ENCODE measurements at regions of chr13 and their contacts with region 1.

Region 1: GRCh38 chr13:23609874-23610576 is 39.8 kb downstream of the TNFRSF19 start:
- DNase-seq: no peak
- H3K4me3 ChIP-seq: peak overlapping the region; percentile 19 to 27
- H3K27ac ChIP-seq: peak overlapping the region; percentile 75
- H3K4me1 ChIP-seq: peaks cover 34% of the 10 kb centered on the region
- H3K27me3 ChIP-seq: no peaks in the 10 kb centered on the region
- CTCF ChIP-seq: no peak
- POLR2A ChIP-seq: no peak

Region 2: GRCh38 chr13:23321535-23322241 is 288.3 kb before region 1 on chr13:
- intact Hi-C with region 1: loop called (anchors 5 kb)
- DNase-seq: no peak
- H3K4me3 ChIP-seq: peak overlapping the region in 1 of 2 donors; percentile 27
- H3K27ac ChIP-seq: no peak overlapping the region
- H3K4me1 ChIP-seq: peaks cover 23% of the 10 kb centered on the region
- H3K27me3 ChIP-seq: no peaks in the 10 kb centered on the region
- CTCF ChIP-seq: no peak
- POLR2A ChIP-seq: no peak

Region 3: GRCh38 chr13:23599083-23599925 is 10.7 kb before region 1 on chr13:
- intact Hi-C with region 1: no loop called
- DNase-seq: no peak
- H3K4me3 ChIP-seq: no peak overlapping the region
- H3K27ac ChIP-seq: no peak overlapping the region
- H3K4me1 ChIP-seq: no peaks in the 10 kb centered on the region
- H3K27me3 ChIP-seq: no peaks in the 10 kb centered on the region
- CTCF ChIP-seq: no peak
- POLR2A ChIP-seq: no peak

Region 4: DNA sequence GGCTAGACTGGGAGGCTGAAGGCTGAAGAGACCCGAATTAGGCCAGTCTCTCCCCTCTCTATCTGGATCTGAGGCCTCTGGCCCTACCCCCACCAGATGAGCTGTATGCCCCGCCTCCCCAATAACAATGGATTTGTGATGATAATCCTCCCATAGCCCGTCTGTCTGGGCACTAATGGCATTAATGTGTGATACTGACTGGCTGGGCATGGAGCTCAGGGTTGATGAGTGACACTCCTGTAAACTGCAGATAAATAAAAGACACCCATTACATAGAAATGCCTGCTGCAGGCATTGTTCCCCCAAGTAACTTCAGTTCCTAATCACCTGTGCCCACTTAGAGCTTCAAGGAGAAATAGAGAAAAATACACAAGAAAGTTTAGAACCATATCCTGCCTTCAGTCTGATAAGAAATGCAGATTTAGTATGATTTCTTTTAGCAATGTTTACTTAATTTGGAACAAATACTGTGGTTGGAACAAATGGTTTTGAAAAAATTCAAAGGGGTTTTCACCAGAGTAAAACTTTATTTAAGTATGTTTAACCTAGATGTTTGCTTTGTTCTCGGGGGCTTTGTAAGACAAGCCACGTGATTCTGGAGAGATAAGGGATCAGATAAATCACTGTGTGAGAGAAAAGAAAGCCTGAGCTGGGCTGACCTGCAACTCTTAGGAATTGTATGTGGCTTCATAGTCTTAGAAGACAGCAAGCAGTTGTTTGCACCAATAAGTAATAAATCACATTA is 20.5 kb after region 1 on chr13:
- intact Hi-C with region 1: loop called (anchors 2 kb)
- DNase-seq: no peak
- H3K4me3 ChIP-seq: no peak overlapping the region
- H3K27ac ChIP-seq: no peak overlapping the region
- H3K4me1 ChIP-seq: no peaks in the 10 kb centered on the region
- H3K27me3 ChIP-seq: no peaks in the 10 kb centered on the region
- CTCF ChIP-seq: no peak
- POLR2A ChIP-seq: no peak

Measured in vagina (tissue), 2 donors.